CD4-positive, alpha-beta T cell (primary cell): ENCODE measurements at regions of chr2 and their contacts with region 1.

Region 1: GRCh38 chr2:9951272-9951972 is at the start of gene GRHL1:
- DNase-seq: peak; percentile 78 to 98 (median 88)
- ATAC-seq: peak; percentile 95
- H3K4me3 ChIP-seq: peak within 1 kb of the TSS; percentile 52
- H3K4me3 Mint-ChIP-seq: peak within 1 kb of the TSS; percentile 94
- H3K27ac ChIP-seq: no peak within 1 kb of the TSS
- H3K27ac Mint-ChIP-seq: peak within 1 kb of the TSS; percentile 39
- H3K4me1 ChIP-seq: peaks cover 10% of the 10 kb centered on the region
- H3K4me1 Mint-ChIP-seq: peaks cover 4% of the 10 kb centered on the region
- H3K27me3 ChIP-seq: peaks cover 11 to 21% of the 10 kb centered on the region in 2 experiments
- H3K27me3 Mint-ChIP-seq: peaks cover 56% of the 10 kb centered on the region
- CTCF ChIP-seq: no peak
- total RNA-seq, gene GRHL1: 0.28 to 0.38 TPM

Region 2: DNA sequence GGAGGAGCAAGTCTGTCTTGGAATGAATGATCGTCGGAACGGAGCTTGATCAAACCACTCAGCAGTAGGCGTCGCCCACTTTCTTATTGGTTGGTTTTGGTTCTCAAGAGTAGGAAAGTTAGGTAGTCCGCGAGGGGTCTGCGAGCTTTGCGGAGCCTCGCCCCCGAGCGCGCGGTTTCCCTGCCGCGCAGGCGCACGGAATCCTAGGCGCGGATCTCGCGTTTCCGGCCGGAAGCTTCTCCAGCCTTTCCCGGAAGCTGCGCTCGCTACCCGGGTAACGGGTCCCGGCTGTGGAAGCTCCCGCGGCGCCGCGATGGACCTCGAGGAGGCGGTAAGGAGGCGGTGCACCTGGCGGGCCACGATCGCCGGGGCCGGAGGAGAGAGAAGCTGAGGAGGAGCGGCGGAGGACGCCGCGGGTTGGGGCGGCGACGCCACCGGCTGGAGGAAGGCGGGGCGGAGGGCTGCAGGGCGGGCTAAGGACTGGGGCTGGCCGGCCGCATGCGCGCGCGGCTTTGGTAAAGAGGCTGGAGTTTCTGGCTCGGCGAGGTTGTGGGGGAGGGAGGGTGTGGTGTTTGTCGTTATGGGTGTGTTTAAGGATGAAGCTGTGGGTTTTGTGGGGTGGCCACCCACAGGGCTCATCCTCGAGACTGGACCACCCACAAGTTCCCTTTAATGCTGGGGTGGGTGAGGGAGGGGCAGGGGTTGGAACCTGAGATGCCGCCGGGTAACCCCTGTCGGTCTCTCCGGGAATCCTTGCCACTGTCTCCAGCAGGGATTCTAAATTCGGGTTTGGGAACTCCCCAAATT is 108.0 kb before region 1 on chr2 and contains the start of gene TAF1B:
- CTCF ChIA-PET with region 1: no interaction called
- POLR2A ChIA-PET with region 1: no interaction called
- intact Hi-C with region 1: loop called in 1 of 2 experiments (anchors 5 kb)
- DNase-seq: peak; percentile 55 to 93 (median 76)
- ATAC-seq: peak; percentile 82
- H3K4me3 ChIP-seq: peak within 1 kb of the TSS; percentile 93
- H3K4me3 Mint-ChIP-seq: peak within 1 kb of the TSS; percentile 93
- H3K27ac ChIP-seq: peak within 1 kb of the TSS; percentile 66 to 75
- H3K27ac Mint-ChIP-seq: peak within 1 kb of the TSS; percentile 90
- H3K4me1 ChIP-seq: peaks cover 19% of the 10 kb centered on the region
- H3K4me1 Mint-ChIP-seq: peaks cover 50% of the 10 kb centered on the region
- H3K27me3 ChIP-seq: no peaks in the 10 kb centered on the region
- H3K27me3 Mint-ChIP-seq: no peaks in the 10 kb centered on the region
- CTCF ChIP-seq: no peak
- total RNA-seq, gene TAF1B: 9.9 to 10.8 TPM